Right cardiac atrium (tissue), 5 donors: ENCODE measurements at regions of chr17 and their contacts with region 1.

Region 1: GRCh38 chr17:2122641-2123302 is 67.9 kb downstream of the HIC1 start:
- DNase-seq: peak; percentile 85 to 90 (median 90)
- ATAC-seq: peak; percentile 88 to 92
- H3K4me3 ChIP-seq: no peak overlapping the region
- H3K27ac ChIP-seq: peak overlapping the region; percentile 82
- H3K4me1 ChIP-seq: peaks cover 18% of the 10 kb centered on the region
- H3K27me3 ChIP-seq: no peaks in the 10 kb centered on the region

Region 2: GRCh38 chr17:2064980-2065785 is 57.6 kb before region 1 on chr17:
- intact Hi-C with region 1: loop called in 1 of 4 experiments (anchors 10 kb)
- DNase-seq: peak; percentile 76 to 87 (median 84)
- ATAC-seq: peak in 1 of 2 donors; percentile 3
- H3K4me3 ChIP-seq: no peak overlapping the region
- H3K27ac ChIP-seq: peak overlapping the region; percentile 68
- H3K4me1 ChIP-seq: peaks cover 13% of the 10 kb centered on the region
- H3K27me3 ChIP-seq: no peaks in the 10 kb centered on the region